A549 (cell line): ENCODE measurements at regions of chr6 and their contacts with region 1.

Region 1: DNA sequence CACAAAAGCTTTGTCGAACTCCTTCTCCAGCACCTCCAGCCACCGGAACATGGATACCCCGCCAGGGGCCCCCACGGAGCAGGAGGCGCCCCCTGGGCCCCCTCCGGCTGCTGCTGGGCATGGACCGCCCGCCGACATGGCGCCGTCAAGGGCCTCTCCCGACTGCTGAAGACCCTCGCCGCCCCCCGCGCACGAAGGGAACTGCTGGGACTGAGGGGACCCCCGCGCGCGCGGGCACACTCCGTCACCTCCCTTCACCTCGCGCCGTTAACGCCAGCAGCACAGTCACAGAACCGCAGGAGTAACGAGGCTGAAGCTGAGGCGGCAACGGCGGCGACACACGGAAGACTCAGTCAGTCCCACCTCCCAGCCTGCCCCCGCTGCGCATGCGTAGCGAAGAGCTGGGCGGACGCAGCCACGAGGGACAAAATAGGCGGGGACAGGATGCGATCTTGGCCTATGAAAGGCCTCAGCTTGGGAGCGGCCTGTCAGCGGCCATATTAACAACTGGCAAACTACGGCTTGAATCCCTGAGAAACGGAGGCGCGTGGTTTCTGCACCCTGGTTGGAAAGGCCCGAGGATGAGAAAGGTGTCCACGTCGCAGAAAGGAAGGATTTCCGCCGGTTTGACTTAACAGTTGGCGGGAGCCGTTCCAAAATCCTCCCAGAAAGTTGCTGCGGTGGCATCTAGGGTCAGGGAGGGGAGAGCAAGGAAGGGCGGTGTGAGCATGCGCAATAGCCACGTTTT is at the start of gene GOPC:
- DNase-seq: peak; percentile 92 to 97
- ATAC-seq: peak; percentile 92 to 97
- H3K4me3 ChIP-seq: peak within 1 kb of the TSS; percentile 67
- H3K27ac ChIP-seq: peak within 1 kb of the TSS; percentile 94 to 95
- H3K4me1 ChIP-seq: peaks cover 20% of the 10 kb centered on the region; the same call in 2 of the 3 replicates
- CTCF ChIP-seq: no peak
- EP300 ChIP-seq: no peak
- POLR2A ChIP-seq: peak; percentile 85
- RAD21 ChIP-seq: no peak
- polyA plus RNA-seq, gene GOPC: 27.8 and 38.9 TPM in 2 replicates

Region 2: GRCh38 chr6:117346142-117346930 is 256.0 kb before region 1 on chr6:
- CTCF ChIA-PET with region 1: interaction called, 19 read pairs
- POLR2A ChIA-PET with region 1: no interaction called
- DNase-seq: peak in 1 of 2 experiments; percentile 8
- ATAC-seq: 0 out of 6 replicates have a peak, but pooled peaks of 1 of the 2 experiments have one; percentile 23
- H3K4me3 ChIP-seq: no peak overlapping the region
- H3K27ac ChIP-seq: peak overlapping the region; percentile 67 to 77
- H3K4me1 ChIP-seq: peaks cover 9% of the 10 kb centered on the region; the same call in 2 of the 3 replicates
- CTCF ChIP-seq: peak; percentile 52
- EP300 ChIP-seq: no peak
- POLR2A ChIP-seq: no peak
- RAD21 ChIP-seq: peak; percentile 63 to 81

Region 3: GRCh38 chr6:117352466-117353081 is 249.8 kb before region 1 on chr6:
- CTCF ChIA-PET with region 1: interaction called, 13 read pairs
- POLR2A ChIA-PET with region 1: no interaction called
- DNase-seq: peak; percentile 13 to 36
- ATAC-seq: peak; percentile 39 to 80; a peak in 4 of 6 replicates
- H3K4me3 ChIP-seq: no peak overlapping the region
- H3K27ac ChIP-seq: peak overlapping the region; percentile 59 to 83
- H3K4me1 ChIP-seq: peaks cover 12% of the 10 kb centered on the region; the same call in 2 of the 3 replicates
- CTCF ChIP-seq: peak; percentile 54
- EP300 ChIP-seq: no peak
- POLR2A ChIP-seq: no peak
- RAD21 ChIP-seq: peak; percentile 61 to 64

Region 4: GRCh38 chr6:117591405-117591804 is 10.9 kb before region 1 on chr6:
- CTCF ChIA-PET with region 1: interaction called, 10 read pairs
- POLR2A ChIA-PET with region 1: interaction called, 3 read pairs
- DNase-seq: no peak
- ATAC-seq: peak in 1 of 2 experiments; percentile 41; a peak in 1 of 6 replicates
- H3K4me3 ChIP-seq: no peak overlapping the region
- H3K27ac ChIP-seq: no peak overlapping the region
- H3K4me1 ChIP-seq: no peaks in the 10 kb centered on the region
- CTCF ChIP-seq: no peak
- EP300 ChIP-seq: no peak
- POLR2A ChIP-seq: no peak
- RAD21 ChIP-seq: no peak